ENCODE measurements at regions of chr1 and their contacts with region 1.

Region 1: GRCh38 chr1:9234223-9235095 is at the start of gene H6PD:
- DNase-seq: no peak
- H3K4me3 ChIP-seq: peak within 1 kb of the TSS; percentile 66
- CTCF ChIP-seq: peak; percentile 86

Region 2: DNA sequence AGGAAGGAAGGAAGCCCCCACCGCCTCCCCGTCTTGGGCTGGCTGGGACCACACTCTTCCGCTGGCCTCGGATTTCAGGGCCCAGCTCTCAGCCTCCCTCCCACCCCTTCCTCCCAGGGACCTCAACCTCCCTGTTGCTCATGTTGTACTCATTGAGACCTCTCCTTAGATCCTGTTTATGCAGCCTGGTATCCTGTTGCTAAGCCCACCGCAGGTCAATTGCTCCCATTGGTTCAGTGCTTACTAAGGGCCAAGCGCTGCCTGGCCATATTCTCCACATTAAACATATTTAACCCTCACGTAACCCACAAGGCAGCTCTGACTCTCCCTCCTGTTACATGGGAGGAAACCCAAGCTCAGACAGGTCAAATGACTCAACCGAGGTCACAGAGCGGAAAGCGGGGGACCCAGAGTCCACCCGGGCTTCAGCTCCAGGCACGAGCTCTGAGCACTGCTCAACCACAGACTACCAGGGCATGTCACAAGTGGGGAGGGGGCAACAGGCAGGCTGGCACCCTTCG is 23.1 kb before region 1 on chr1:
- CTCF ChIA-PET with region 1: interaction called, 30 read pairs
- POLR2A ChIA-PET with region 1: no interaction called
- DNase-seq: no peak
- H3K4me3 ChIP-seq: no peak overlapping the region
- CTCF ChIP-seq: no peak

Region 3: DNA sequence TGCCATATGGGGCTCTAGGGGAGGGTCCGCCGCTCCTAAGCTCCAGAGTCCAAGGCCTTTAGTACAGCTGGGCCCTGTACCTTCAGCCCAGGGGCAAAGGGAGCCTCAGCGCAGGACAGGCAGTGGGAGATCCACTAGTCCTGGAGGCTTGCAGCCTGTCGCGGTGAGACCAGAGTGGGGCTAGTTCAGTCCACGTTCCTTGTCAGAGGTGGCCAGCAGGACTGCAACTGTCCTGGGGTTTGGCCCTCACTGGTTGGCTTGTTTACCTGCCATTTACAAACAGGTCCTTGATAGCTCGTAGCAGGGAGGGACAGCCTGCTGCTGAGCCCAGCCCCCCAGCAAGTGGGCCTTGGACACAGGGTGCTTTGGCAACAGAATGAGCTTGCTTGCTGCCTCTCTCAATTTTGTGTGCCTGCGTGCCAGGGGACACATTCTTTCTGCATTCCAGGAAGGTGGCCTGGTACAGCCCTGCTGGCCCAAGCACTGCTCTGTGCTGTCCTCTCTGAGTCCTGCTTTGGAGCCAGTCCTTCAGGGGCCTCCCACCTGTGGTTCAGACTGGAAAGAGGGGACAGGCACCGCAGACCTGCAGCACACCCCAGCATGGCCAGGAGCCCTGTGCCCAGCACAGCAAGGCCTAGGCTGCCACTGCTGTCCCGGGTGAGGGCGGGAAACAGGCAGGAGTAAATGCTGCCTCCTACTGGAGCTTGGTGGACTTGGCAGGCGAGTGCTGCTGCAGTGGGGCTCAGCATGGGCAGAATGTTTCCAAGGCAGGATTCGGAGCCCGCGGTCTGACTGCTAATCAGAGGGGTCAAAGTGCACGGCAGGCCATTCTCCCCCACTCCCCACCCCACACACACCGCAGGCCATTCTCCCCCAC is 15.3 kb after region 1 on chr1:
- CTCF ChIA-PET with region 1: interaction called, 34 read pairs
- POLR2A ChIA-PET with region 1: interaction called, 7 read pairs
- DNase-seq: no peak
- H3K4me3 ChIP-seq: no peak overlapping the region
- CTCF ChIP-seq: peak; percentile 55

Measured in AG04449 (cell line).